CD4-positive, alpha-beta T cell (primary cell): ENCODE measurements at regions of chr11 and their contacts with region 1.

Region 1: DNA sequence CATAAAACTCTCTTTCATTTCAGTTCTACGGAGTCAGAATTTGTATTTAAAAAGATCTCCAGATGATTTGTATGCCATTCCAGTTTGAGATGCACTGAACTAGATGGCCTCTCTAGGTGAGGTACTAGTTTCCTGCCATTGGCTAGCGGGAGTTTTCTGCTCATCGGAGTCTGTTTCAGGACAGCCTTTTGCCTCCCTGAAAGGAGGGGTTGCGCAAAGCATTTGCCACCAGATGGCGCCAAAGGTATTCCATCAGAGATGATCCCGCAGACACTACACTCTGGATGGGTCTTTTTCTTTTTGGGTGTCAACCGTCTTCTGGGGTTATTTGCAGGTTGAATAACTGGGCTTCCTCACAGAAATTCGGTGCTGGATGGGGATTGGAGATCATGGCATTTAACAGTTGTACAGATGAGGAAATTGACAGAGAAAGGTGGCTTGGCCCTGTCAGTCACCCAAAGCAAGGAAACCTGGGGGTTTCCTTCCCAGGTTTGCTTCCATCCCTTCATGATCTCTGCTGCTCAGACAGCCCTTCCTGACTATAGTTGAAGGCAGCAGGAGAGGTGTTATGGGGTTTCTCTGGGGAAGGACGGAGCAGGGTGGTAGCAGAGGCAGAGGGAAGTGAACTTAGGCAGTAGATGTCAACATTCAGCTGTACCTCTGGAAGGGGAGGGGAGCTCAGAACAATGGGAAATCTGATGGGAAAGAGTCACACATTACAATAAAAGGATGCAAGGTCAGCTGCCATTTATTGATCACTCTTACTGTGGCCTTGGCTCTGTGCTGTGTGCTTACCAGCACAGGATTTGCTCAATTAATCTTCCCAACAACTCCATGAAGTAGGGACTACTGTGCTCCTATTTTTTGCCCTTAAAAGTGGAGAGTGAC is 81.6 kb downstream of the CCDC81 start:
- DNase-seq: peak; percentile 50 to 79 (median 65)
- ATAC-seq: peak; percentile 43
- H3K4me3 ChIP-seq: no peak overlapping the region
- H3K4me3 Mint-ChIP-seq: no peak overlapping the region
- H3K27ac ChIP-seq: no peak overlapping the region
- H3K27ac Mint-ChIP-seq: no peak overlapping the region
- H3K4me1 ChIP-seq: no peaks in the 10 kb centered on the region
- H3K4me1 Mint-ChIP-seq: no peaks in the 10 kb centered on the region
- H3K27me3 ChIP-seq: no peaks in the 10 kb centered on the region
- H3K27me3 Mint-ChIP-seq: no peaks in the 10 kb centered on the region
- CTCF ChIP-seq: peak; percentile 91

Region 2: DNA sequence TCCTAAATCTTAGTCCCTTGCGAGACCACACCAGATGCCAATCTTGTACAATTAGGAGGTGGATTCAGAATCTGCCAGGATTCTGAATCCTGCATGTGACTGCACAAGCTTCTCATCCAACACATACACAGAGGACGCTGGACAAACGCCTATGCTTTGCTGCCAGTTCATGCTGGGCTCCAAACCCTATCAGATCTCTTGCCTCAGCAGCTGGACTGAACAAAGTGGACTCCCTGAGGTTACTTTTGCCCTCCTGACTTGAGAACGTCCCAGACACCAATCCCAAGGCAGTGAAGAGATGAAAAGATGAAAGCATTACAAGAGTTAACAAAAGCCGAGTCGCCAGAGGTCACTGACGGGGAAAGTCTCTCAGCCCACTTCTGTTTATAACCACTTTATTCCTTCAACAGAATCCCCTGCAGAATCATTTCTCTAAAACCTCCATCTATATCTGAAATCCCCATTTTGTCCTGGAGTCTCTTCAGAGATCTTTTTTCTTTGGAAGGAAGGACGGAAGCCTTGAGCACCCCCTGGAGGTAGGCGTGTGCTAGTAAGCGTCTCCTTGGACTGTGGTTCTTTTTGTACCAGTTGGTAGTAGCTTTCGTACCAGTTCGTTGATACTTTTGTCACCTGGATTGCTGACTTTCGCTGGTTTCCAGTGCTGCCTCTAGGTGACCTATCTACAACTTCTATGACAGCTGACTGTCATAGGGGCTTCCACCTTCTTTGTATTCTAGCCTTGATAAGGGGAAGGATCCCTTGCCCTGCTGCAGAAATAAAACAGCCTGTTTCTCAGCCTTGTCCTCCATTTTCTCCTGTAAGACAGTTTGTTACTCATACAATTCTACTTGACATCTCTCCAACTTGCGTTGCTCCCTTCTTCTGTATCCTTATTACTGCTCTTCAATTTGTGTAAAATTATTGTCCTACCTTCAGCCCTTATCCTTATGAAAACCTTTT is 237.9 kb before region 1 on chr11:
- CTCF ChIA-PET with region 1: no interaction called
- POLR2A ChIA-PET with region 1: no interaction called
- intact Hi-C with region 1: no loop called
- DNase-seq: peak; percentile 26 to 82 (median 43)
- ATAC-seq: peak; percentile 95
- H3K4me3 ChIP-seq: peak overlapping the region; percentile 21
- H3K4me3 Mint-ChIP-seq: peak overlapping the region; percentile 66
- H3K27ac ChIP-seq: no peak overlapping the region
- H3K27ac Mint-ChIP-seq: no peak overlapping the region
- H3K4me1 ChIP-seq: peaks cover 8% of the 10 kb centered on the region
- H3K4me1 Mint-ChIP-seq: peaks cover 11% of the 10 kb centered on the region
- H3K27me3 ChIP-seq: no peaks in the 10 kb centered on the region
- H3K27me3 Mint-ChIP-seq: peaks cover 31% of the 10 kb centered on the region
- CTCF ChIP-seq: peak; percentile 87

Region 3: GRCh38 chr11:86341382-86341781 is 114.9 kb before region 1 on chr11:
- CTCF ChIA-PET with region 1: no interaction called
- POLR2A ChIA-PET with region 1: no interaction called
- intact Hi-C with region 1: no loop called
- DNase-seq: no peak
- ATAC-seq: no peak
- H3K4me3 ChIP-seq: no peak overlapping the region
- H3K4me3 Mint-ChIP-seq: no peak overlapping the region
- H3K27ac ChIP-seq: no peak overlapping the region
- H3K27ac Mint-ChIP-seq: no peak overlapping the region
- H3K4me1 ChIP-seq: no peaks in the 10 kb centered on the region
- H3K4me1 Mint-ChIP-seq: peaks cover 19% of the 10 kb centered on the region
- H3K27me3 ChIP-seq: no peaks in the 10 kb centered on the region
- H3K27me3 Mint-ChIP-seq: no peaks in the 10 kb centered on the region
- CTCF ChIP-seq: no peak

Region 4: DNA sequence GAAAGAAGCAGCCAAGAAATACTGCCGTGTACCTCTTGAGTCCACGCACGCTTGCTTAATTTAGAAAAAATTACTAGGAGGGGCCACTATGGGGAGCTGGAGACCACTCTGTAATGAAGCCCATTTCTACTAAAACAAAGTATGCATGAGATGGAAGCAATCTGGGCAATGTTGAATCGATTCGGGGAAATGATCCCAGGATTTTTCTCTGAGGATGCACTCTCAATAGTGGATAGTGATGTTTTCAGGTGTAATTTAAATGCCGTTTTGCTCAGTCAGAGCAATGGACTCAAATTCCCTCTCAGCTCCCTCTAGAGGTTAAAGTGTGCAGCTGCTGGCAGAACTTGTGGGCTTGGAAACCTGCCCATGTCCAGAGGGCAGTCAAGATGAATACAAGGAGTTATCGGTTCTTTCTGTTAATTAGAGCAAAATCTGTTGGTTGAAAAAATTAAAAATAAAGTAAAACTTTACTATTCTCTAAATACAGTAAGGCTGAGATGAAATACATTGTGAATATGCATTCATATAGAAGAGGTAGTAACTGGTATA is 152.0 kb after region 1 on chr11:
- CTCF ChIA-PET with region 1: no interaction called
- POLR2A ChIA-PET with region 1: no interaction called
- intact Hi-C with region 1: loop called in 1 of 2 experiments (anchors 5 kb)
- DNase-seq: peak in 7 of 14 experiments; percentile 3 to 46 (median 22)
- ATAC-seq: peak; percentile 55
- H3K4me3 ChIP-seq: no peak overlapping the region
- H3K4me3 Mint-ChIP-seq: no peak overlapping the region
- H3K27ac ChIP-seq: no peak overlapping the region
- H3K27ac Mint-ChIP-seq: no peak overlapping the region
- H3K4me1 ChIP-seq: no peaks in the 10 kb centered on the region
- H3K4me1 Mint-ChIP-seq: peaks cover 9% of the 10 kb centered on the region
- H3K27me3 ChIP-seq: no peaks in the 10 kb centered on the region
- H3K27me3 Mint-ChIP-seq: no peaks in the 10 kb centered on the region
- CTCF ChIP-seq: peak; percentile 62

Region 5: GRCh38 chr11:86818466-86819192 is 362.3 kb after region 1 on chr11:
- CTCF ChIA-PET with region 1: no interaction called
- POLR2A ChIA-PET with region 1: no interaction called
- intact Hi-C with region 1: loop called (anchors 1 kb)
- DNase-seq: peak in 3 of 14 experiments; percentile 58 to 64 (median 63)
- ATAC-seq: no peak
- H3K4me3 ChIP-seq: no peak overlapping the region
- H3K4me3 Mint-ChIP-seq: no peak overlapping the region
- H3K27ac ChIP-seq: no peak overlapping the region
- H3K27ac Mint-ChIP-seq: no peak overlapping the region
- H3K4me1 ChIP-seq: no peaks in the 10 kb centered on the region
- H3K4me1 Mint-ChIP-seq: peaks cover 5% of the 10 kb centered on the region
- H3K27me3 ChIP-seq: peaks cover 0 to 5% of the 10 kb centered on the region in 2 experiments
- H3K27me3 Mint-ChIP-seq: peaks cover 7% of the 10 kb centered on the region
- CTCF ChIP-seq: peak; percentile 79

Region 6: DNA sequence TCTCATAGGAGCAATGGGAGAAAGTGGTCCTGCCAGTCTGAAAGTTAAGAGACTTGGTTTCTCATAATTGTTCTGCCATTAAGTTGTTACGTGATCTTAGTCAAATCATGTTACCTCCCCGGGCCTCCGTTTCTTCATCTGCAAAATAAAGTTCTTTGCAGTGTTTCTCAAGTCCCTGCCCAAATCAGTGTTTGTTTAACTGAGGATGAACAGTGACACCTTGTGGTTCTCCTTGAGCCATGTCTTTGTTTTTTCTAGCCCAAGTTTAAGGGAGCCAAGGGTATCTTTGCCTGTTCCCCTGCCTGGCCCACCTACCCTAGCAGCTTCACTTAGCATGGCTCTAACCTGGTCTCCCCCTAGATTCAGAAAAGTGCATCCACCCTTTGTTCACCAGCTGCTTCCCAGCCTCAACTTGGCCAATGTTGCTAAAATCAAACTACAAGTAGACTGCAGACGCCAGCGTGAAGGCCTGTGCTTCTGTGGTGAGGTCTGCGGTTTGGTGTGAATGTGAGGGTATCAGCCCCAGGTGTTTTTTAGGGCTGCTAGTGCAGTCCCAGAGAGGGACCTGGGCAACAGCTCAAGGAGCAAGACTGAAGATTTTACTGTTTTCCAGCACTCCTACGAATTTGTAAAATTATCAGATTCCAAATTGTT is 463.4 kb after region 1 on chr11:
- CTCF ChIA-PET with region 1: no interaction called
- POLR2A ChIA-PET with region 1: no interaction called
- intact Hi-C with region 1: loop called in 1 of 2 experiments (anchors 10 kb)
- DNase-seq: peak in 3 of 14 experiments; percentile 20 to 24 (median 22)
- ATAC-seq: no peak
- H3K4me3 ChIP-seq: no peak overlapping the region
- H3K4me3 Mint-ChIP-seq: no peak overlapping the region
- H3K27ac ChIP-seq: no peak overlapping the region
- H3K27ac Mint-ChIP-seq: no peak overlapping the region
- H3K4me1 ChIP-seq: peaks cover 3% of the 10 kb centered on the region
- H3K4me1 Mint-ChIP-seq: peaks cover 9% of the 10 kb centered on the region
- H3K27me3 ChIP-seq: no peaks in the 10 kb centered on the region
- H3K27me3 Mint-ChIP-seq: no peaks in the 10 kb centered on the region
- CTCF ChIP-seq: no peak